ENCODE measurements at regions of chr1 and their contacts with region 1.

Region 1: GRCh38 chr1:2381741-2382620 is 9.4 kb downstream of the MORN1 start:
- DNase-seq: peak; percentile 87
- ATAC-seq: peak; percentile 90
- H3K4me3 Mint-ChIP-seq: no peak overlapping the region
- H3K27ac Mint-ChIP-seq: no peak overlapping the region
- H3K4me1 Mint-ChIP-seq: no peaks in the 10 kb centered on the region
- H3K27me3 Mint-ChIP-seq: no peaks in the 10 kb centered on the region
- CTCF ChIP-seq: peak; percentile 77

Region 2: GRCh38 chr1:2174348-2175054 is 207.5 kb before region 1 on chr1:
- CTCF ChIA-PET with region 1: interaction called, 25 read pairs
- POLR2A ChIA-PET with region 1: no interaction called
- DNase-seq: peak; percentile 84
- ATAC-seq: peak; percentile 88
- H3K4me3 Mint-ChIP-seq: no peak overlapping the region
- H3K27ac Mint-ChIP-seq: peak overlapping the region; percentile 88
- H3K4me1 Mint-ChIP-seq: 0 out of 2 replicates have a peak, but pooled peaks cover 3% of the 10 kb centered on the region
- H3K27me3 Mint-ChIP-seq: no peaks in the 10 kb centered on the region
- CTCF ChIP-seq: peak; percentile 85

Region 3: GRCh38 chr1:2205191-2205952 is 176.6 kb before region 1 on chr1:
- CTCF ChIA-PET with region 1: interaction called, 37 read pairs
- POLR2A ChIA-PET with region 1: no interaction called
- DNase-seq: peak; percentile 97
- ATAC-seq: peak; percentile 82
- H3K4me3 Mint-ChIP-seq: peak overlapping the region; percentile 55
- H3K27ac Mint-ChIP-seq: no peak overlapping the region
- H3K4me1 Mint-ChIP-seq: peaks cover 16% of the 10 kb centered on the region
- H3K27me3 Mint-ChIP-seq: peaks cover 15% of the 10 kb centered on the region
- CTCF ChIP-seq: no peak

Region 4: DNA sequence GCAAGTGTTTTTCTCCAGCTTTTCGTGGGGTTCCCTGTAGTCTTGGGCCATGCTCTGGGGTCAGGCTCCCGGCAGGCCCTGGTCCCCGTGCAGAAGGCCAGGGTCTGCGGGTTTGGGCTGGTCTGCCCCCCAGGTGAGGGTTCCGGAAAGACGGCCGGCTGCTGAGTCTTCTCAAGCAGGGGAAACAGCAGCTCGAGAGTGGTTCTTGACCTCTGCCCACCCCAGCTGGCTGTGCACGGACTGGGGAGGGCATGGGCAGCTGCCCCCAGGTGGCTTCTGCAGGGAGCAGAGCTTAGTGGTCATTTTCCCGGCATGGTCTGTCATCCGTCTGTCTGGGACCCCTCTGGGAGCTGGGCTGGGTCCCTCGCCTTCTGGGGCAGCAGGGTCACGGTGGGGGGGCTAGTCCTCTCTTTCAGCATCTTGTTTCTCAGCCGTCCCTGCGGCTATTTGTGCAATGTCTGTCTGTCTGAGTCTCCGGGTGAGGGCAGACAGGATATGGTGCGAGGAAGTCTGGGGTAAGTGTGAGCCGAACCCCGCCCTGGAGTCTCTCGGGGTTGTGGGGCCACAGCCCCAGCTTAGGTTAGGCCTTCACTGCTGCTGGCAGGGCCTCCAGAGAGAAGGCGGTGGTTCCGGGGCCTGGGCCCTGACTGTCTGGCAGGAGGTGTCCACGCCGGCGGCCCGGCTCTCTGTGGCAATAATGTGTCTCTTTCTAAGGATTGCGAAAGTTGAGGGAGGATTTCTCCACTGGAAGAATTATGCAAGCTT is 147.8 kb before region 1 on chr1:
- CTCF ChIA-PET with region 1: interaction called, 10 read pairs
- POLR2A ChIA-PET with region 1: no interaction called
- DNase-seq: no peak
- ATAC-seq: no peak
- H3K4me3 Mint-ChIP-seq: no peak overlapping the region
- H3K27ac Mint-ChIP-seq: peak overlapping the region; percentile 80
- H3K4me1 Mint-ChIP-seq: peaks cover 66% of the 10 kb centered on the region
- H3K27me3 Mint-ChIP-seq: no peaks in the 10 kb centered on the region
- CTCF ChIP-seq: no peak

Region 5: DNA sequence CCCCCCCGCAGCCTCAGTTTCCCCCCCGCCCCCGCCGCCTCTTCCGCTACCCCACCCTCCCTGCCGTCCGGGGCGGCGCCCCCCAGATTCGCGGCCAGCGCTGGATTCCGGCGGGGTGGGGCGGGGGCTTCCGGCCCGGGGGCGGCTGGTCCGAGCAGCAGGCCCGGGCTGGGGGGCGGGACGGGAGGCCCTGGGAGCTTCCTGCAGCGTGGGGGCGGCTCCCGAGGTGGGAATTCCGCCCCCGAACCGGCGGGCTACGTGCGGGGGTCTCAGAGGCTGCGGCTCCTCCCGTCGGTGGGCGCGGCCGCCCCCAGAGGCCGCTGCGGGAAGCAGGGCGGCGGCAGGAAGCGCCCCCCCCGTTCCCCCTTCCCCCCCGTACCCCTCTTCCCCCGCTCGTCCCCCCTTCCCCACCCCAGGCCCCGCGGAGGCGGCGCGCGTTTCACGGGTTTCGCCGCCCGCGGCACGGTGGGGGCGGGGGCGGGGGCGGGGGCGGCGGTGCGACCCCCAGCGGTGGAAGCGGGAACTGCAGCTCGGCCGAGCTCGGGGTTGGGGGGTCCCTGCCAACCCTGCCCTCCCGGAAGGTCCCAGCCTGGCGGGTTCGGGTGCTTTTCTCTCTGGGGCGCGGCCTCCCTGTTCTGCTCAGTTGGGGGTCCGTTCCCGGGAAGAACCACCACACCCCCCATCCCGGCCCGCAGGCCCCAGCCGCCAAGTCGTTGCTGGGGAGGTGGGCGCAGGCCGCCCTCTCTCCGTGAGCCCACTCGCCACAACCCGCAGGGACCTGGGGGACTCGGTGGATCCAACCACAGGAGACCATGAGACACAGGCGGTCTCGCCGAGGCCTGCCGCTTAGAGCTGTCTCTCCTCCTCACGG is 66.9 kb before region 1 on chr1:
- CTCF ChIA-PET with region 1: interaction called, 98 read pairs
- POLR2A ChIA-PET with region 1: interaction called, 3 read pairs
- DNase-seq: peak; percentile 68
- ATAC-seq: peak; percentile 2
- H3K4me3 Mint-ChIP-seq: no peak overlapping the region
- H3K27ac Mint-ChIP-seq: no peak overlapping the region
- H3K4me1 Mint-ChIP-seq: peaks cover 8% of the 10 kb centered on the region
- H3K27me3 Mint-ChIP-seq: no peaks in the 10 kb centered on the region; the same call in 1 of the 2 replicates
- CTCF ChIP-seq: peak; percentile 100

Region 6: GRCh38 chr1:2459757-2460156 is 77.8 kb after region 1 on chr1:
- CTCF ChIA-PET with region 1: no interaction called
- POLR2A ChIA-PET with region 1: no interaction called
- DNase-seq: no peak
- ATAC-seq: no peak
- H3K4me3 Mint-ChIP-seq: no peak overlapping the region
- H3K27ac Mint-ChIP-seq: no peak overlapping the region
- H3K4me1 Mint-ChIP-seq: no peaks in the 10 kb centered on the region
- H3K27me3 Mint-ChIP-seq: no peaks in the 10 kb centered on the region
- CTCF ChIP-seq: no peak